T-cell (primary cell): ENCODE measurements at regions of chr11 and their contacts with region 1.

Region 1: GRCh38 chr11:14687943-14688627 is 44.5 kb downstream of the PDE3B start:
- DNase-seq: no peak
- ATAC-seq: peak in 1 of 4 experiments; percentile 54
- H3K4me3 ChIP-seq: no peak overlapping the region
- H3K4me3 Mint-ChIP-seq: peak overlapping the region in 1 of 3 donors; percentile 28
- H3K27ac ChIP-seq: no peak overlapping the region
- H3K27ac Mint-ChIP-seq: peak overlapping the region; percentile 44 to 45
- H3K4me1 ChIP-seq: no peaks in the 10 kb centered on the region
- H3K4me1 Mint-ChIP-seq: peaks cover 62 to 67% (median 62%) of the 10 kb centered on the region in 3 donors
- H3K27me3 ChIP-seq: no peaks in the 10 kb centered on the region
- H3K27me3 Mint-ChIP-seq: no peaks in the 10 kb centered on the region

Region 2: DNA sequence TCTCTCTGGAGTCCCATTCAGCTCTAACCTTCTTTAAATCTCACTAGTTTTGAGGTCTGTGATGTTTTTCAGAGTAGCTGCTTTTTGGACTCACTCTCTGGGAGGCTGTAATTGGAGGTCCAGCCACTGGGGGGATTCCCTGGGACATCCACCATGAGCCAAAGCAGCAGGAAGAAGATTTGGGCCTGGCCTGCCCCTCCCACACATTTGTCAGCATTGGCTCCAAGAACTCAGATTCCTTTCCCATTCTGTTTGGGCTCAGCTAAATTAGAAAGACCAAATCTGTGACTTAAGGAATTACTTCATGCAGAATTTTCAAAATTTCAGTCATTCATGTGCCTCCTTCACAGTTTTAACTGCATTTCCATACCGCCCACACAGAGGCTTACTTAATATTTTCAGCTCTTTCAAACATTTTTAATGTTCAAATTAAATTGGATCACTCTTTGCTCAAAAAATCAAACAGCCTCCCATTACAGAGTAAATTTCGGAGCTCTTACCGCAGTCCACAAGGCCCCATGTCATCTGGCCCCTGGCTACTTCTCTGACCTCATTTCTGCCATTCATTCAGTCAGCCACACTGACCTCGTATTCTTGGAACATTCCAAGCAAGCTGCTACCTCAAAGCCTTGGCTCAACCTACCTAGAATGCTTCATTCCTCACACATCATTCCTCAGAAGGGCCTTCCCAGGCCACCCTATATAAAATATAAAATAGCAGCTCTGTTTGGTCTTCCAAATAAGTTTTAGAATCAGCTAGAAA is 274.6 kb before region 1 on chr11:
- CTCF ChIA-PET with region 1: no interaction called
- POLR2A ChIA-PET with region 1: interaction called in 1 of 2 experiments, 13 read pairs
- DNase-seq: no peak
- ATAC-seq: no peak
- H3K4me3 ChIP-seq: no peak overlapping the region
- H3K4me3 Mint-ChIP-seq: no peak overlapping the region
- H3K27ac ChIP-seq: no peak overlapping the region
- H3K27ac Mint-ChIP-seq: peak overlapping the region; percentile 18 to 19
- H3K4me1 ChIP-seq: peaks cover 10 to 29% of the 10 kb centered on the region in 2 experiments
- H3K4me1 Mint-ChIP-seq: peaks cover 24 to 59% (median 38%) of the 10 kb centered on the region in 3 donors
- H3K27me3 ChIP-seq: no peaks in the 10 kb centered on the region
- H3K27me3 Mint-ChIP-seq: no peaks in the 10 kb centered on the region

Region 3: GRCh38 chr11:14727215-14727614 is 39.1 kb after region 1 on chr11:
- CTCF ChIA-PET with region 1: no interaction called
- POLR2A ChIA-PET with region 1: no interaction called
- DNase-seq: no peak
- ATAC-seq: peak in 1 of 4 experiments; percentile 58
- H3K4me3 ChIP-seq: no peak overlapping the region
- H3K4me3 Mint-ChIP-seq: no peak overlapping the region
- H3K27ac ChIP-seq: no peak overlapping the region
- H3K27ac Mint-ChIP-seq: peak overlapping the region in 1 of 2 donors; percentile 35
- H3K4me1 ChIP-seq: peaks cover 0 to 19% of the 10 kb centered on the region in 2 experiments
- H3K4me1 Mint-ChIP-seq: peaks cover 68 to 74% (median 70%) of the 10 kb centered on the region in 3 donors
- H3K27me3 ChIP-seq: no peaks in the 10 kb centered on the region
- H3K27me3 Mint-ChIP-seq: no peaks in the 10 kb centered on the region